OCI-LY7 (cell line): ENCODE measurements at regions of chr3 and their contacts with region 1.

Region 1: GRCh38 chr3:23830869-23831484 is 25.2 kb downstream of the UBE2E1 start:
- DNase-seq: no peak
- H3K4me3 ChIP-seq: no peak overlapping the region
- H3K27ac ChIP-seq: no peak overlapping the region
- H3K4me1 ChIP-seq: peaks cover 29% of the 10 kb centered on the region
- CTCF ChIP-seq: no peak

Region 2: DNA sequence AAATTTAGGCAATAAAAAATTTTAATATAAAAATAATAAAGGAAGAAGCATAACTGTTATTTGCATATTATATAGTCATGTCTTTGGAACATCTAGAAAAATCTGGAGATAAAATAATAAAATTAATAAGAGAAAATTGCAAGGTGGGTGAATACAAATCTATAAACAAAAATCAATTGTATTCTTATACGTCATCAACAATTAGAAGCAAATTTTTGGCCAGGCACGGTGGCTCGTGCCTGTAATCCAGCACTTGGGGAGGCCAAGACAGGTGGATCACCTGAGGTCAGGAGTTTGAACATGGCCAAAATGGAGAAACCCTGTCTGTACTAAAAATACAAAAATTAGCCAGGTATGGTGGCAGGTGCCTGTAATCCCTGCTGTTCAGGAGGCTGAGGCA is 1013.4 kb before region 1 on chr3:
- CTCF ChIA-PET with region 1: no interaction called
- POLR2A ChIA-PET with region 1: interaction called, 11 read pairs
- intact Hi-C with region 1: no loop called
- DNase-seq: no peak
- H3K4me3 ChIP-seq: no peak overlapping the region
- H3K27ac ChIP-seq: no peak overlapping the region
- H3K4me1 ChIP-seq: no peaks in the 10 kb centered on the region
- CTCF ChIP-seq: no peak

Region 3: DNA sequence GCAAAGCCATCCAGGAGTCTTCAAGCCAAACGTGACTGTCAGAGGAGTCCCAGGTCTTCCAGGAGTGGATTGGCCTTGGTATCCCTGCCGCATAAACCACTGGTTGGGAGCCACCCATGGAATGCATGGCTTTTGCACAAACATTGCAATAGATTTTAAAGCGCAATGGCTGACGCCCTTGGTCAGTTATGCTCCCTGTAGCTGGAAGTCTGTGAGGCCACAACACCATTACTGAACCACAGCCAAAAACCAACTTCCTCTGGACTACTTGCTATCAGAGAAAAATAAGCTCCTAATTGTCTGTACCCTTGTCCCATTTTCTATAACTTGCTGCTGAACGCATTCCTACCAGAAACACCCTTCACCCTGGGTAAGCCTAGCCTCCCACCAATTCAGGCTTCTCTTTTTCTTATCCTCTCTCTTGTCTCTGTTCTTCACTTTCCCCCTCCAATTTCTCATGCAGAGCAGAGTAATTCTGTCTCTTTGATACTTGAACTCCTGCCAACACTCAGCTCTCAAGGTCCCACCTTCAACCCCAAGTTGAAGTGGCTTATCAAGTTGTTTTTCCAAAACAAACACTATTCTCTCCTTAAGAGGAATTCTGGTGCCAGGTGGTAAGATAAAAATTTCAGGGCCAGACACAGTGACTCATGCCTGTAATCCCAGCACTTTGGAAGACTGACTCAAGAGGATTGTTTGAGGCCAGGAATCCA is 201.6 kb before region 1 on chr3:
- CTCF ChIA-PET with region 1: no interaction called
- POLR2A ChIA-PET with region 1: no interaction called
- intact Hi-C with region 1: no loop called
- DNase-seq: no peak
- H3K4me3 ChIP-seq: no peak overlapping the region
- H3K27ac ChIP-seq: no peak overlapping the region
- H3K4me1 ChIP-seq: no peaks in the 10 kb centered on the region
- CTCF ChIP-seq: no peak

Region 4: DNA sequence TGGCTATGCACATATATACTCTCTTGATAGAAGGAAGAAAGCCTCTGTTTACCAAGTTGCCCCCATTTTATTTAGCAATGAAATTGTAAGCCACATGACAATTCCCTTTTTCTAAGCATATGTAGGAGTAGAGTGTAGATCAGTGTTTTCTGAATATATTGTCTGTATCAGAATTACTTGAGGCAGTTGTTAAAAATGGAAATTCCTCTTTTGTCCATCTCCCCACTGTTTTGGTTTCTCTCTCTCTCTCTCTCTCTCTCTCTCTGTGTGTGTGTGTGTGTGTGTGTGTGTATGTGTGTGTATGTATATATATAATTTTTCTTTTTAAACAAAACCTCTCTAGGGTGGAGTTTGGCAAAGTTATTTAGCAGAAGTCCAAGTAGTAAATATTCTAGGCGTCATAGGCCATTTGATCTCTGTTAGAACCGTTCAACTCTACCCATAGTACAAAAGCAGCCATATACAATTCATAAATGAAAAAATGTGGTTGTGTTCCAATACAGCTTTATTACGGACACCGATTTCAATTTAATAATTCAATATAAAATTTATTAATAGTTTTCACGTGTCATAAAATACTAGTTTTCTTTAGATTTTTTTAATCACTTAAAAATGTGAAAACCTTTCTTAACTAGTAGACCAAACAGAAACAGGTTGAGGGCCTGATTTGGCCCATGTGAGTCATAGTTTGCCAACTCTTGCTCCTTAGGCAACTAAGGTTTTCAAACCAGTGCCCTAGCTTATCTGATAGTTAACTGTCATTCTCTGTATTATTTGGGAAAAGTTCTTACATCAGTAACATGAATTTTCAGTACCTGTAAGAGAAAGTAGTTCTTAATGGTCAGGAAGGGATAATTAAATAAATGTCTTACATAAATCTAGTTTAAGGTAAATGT is 14.6 kb after region 1 on chr3:
- CTCF ChIA-PET with region 1: no interaction called
- POLR2A ChIA-PET with region 1: interaction called, 25 read pairs
- intact Hi-C with region 1: no loop called
- DNase-seq: no peak
- H3K4me3 ChIP-seq: no peak overlapping the region
- H3K27ac ChIP-seq: no peak overlapping the region
- H3K4me1 ChIP-seq: peaks cover 6% of the 10 kb centered on the region
- CTCF ChIP-seq: no peak